ENCODE measurements at regions of chr14 and their contacts with region 1.

Region 1: GRCh38 chr14:68816262-68816942 is 23.5 kb upstream of the ZFP36L1 start:
- DNase-seq: peak; percentile 83 to 92 (median 86)
- H3K4me3 ChIP-seq: peak overlapping the region; percentile 79
- H3K4me3 Mint-ChIP-seq: peak overlapping the region; percentile 76 to 94 (median 82)
- H3K27ac ChIP-seq: peak overlapping the region; percentile 86
- H3K27ac Mint-ChIP-seq: peak overlapping the region; percentile 90 to 100 (median 96)
- H3K4me1 ChIP-seq: peaks cover 73% of the 10 kb centered on the region
- H3K4me1 Mint-ChIP-seq: peaks cover 68 to 76% (median 73%) of the 10 kb centered on the region in 3 donors
- H3K27me3 ChIP-seq: no peaks in the 10 kb centered on the region
- H3K27me3 Mint-ChIP-seq: no peaks in the 10 kb centered on the region

Region 2: DNA sequence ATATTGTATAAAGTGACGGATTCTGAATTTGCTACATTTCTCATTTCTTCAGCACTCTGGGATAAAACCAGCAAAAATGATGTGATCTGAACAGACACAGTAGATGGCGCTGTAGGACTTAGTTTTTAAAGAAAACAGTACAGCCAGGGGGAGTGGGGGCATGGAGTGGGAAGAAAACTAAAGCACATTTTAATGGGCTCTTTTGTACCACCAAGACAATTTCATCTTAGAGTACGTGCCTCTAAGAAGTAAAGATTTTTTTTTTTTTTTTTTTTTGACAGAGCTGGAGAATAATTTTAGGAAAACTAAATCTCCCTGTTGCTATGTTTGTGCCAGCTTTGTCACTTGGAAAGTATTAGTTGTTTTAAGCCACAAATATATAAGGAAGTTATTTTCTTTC is 872.5 kb before region 1 on chr14:
- CTCF ChIA-PET with region 1: interaction called, 18 read pairs
- POLR2A ChIA-PET with region 1: no interaction called
- DNase-seq: peak; percentile 19 to 52 (median 39)
- H3K4me3 ChIP-seq: no peak overlapping the region
- H3K4me3 Mint-ChIP-seq: no peak overlapping the region
- H3K27ac ChIP-seq: no peak overlapping the region
- H3K27ac Mint-ChIP-seq: no peak overlapping the region
- H3K4me1 ChIP-seq: no peaks in the 10 kb centered on the region
- H3K4me1 Mint-ChIP-seq: peaks cover 0 to 1% (median 0%) of the 10 kb centered on the region in 3 donors
- H3K27me3 ChIP-seq: no peaks in the 10 kb centered on the region
- H3K27me3 Mint-ChIP-seq: no peaks in the 10 kb centered on the region

Region 3: GRCh38 chr14:68283378-68284123 is 532.9 kb before region 1 on chr14:
- CTCF ChIA-PET with region 1: interaction called, 6 read pairs
- POLR2A ChIA-PET with region 1: interaction called, 10 read pairs
- DNase-seq: peak; percentile 42 to 77 (median 65)
- H3K4me3 ChIP-seq: peak overlapping the region; percentile 3
- H3K4me3 Mint-ChIP-seq: peak overlapping the region; percentile 21 to 83 (median 65)
- H3K27ac ChIP-seq: peak overlapping the region; percentile 52
- H3K27ac Mint-ChIP-seq: peak overlapping the region; percentile 89 to 97 (median 94)
- H3K4me1 ChIP-seq: peaks cover 68% of the 10 kb centered on the region
- H3K4me1 Mint-ChIP-seq: peaks cover 64 to 71% (median 65%) of the 10 kb centered on the region in 3 donors
- H3K27me3 ChIP-seq: no peaks in the 10 kb centered on the region
- H3K27me3 Mint-ChIP-seq: no peaks in the 10 kb centered on the region

Region 4: DNA sequence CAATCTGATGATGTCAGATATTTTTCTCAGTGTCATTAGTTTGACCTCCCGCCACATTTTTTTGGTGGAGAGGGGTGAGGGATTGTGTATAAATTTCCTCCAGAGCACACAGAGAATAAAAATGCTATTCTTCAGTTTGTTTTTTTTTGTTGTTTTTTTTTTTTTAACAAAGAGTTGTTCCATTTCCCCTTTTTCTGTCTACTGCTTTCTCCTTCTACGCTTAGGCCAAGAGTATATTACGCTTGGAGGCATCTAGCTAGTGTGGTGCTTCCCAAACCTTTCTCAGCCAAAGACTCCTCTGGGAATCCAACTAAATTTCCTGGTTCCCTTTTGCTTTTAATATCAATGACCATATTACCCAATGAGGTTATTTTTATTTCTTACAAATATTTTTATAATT is 489.2 kb before region 1 on chr14:
- CTCF ChIA-PET with region 1: no interaction called
- POLR2A ChIA-PET with region 1: no interaction called
- DNase-seq: no peak
- H3K4me3 ChIP-seq: no peak overlapping the region
- H3K4me3 Mint-ChIP-seq: no peak overlapping the region
- H3K27ac ChIP-seq: no peak overlapping the region
- H3K27ac Mint-ChIP-seq: peak overlapping the region in 1 of 8 donors; percentile 31
- H3K4me1 ChIP-seq: no peaks in the 10 kb centered on the region
- H3K4me1 Mint-ChIP-seq: no peaks in the 10 kb centered on the region
- H3K27me3 ChIP-seq: no peaks in the 10 kb centered on the region
- H3K27me3 Mint-ChIP-seq: no peaks in the 10 kb centered on the region

Region 5: GRCh38 chr14:68780358-68781160 is 35.8 kb before region 1 on chr14:
- CTCF ChIA-PET with region 1: interaction called, 282 read pairs
- POLR2A ChIA-PET with region 1: interaction called, 38 read pairs
- DNase-seq: peak in 3 of 5 donors; percentile 14 to 49 (median 21)
- H3K4me3 ChIP-seq: peak overlapping the region; percentile 57
- H3K4me3 Mint-ChIP-seq: peak overlapping the region; percentile 71 to 90 (median 85)
- H3K27ac ChIP-seq: peak overlapping the region; percentile 55
- H3K27ac Mint-ChIP-seq: peak overlapping the region; percentile 95 to 99 (median 98)
- H3K4me1 ChIP-seq: peaks cover 79% of the 10 kb centered on the region
- H3K4me1 Mint-ChIP-seq: peaks cover 78 to 95% (median 84%) of the 10 kb centered on the region in 3 donors
- H3K27me3 ChIP-seq: no peaks in the 10 kb centered on the region
- H3K27me3 Mint-ChIP-seq: no peaks in the 10 kb centered on the region

Region 6: GRCh38 chr14:68862954-68863594 is 46.7 kb after region 1 on chr14:
- CTCF ChIA-PET with region 1: no interaction called
- POLR2A ChIA-PET with region 1: no interaction called
- DNase-seq: peak; percentile 27 to 72 (median 41)
- H3K4me3 ChIP-seq: no peak overlapping the region
- H3K4me3 Mint-ChIP-seq: no peak overlapping the region
- H3K27ac ChIP-seq: no peak overlapping the region
- H3K27ac Mint-ChIP-seq: peak overlapping the region in 1 of 8 donors; percentile 47
- H3K4me1 ChIP-seq: no peaks in the 10 kb centered on the region
- H3K4me1 Mint-ChIP-seq: no peaks in the 10 kb centered on the region
- H3K27me3 ChIP-seq: no peaks in the 10 kb centered on the region
- H3K27me3 Mint-ChIP-seq: peaks cover 0 to 3% of the 10 kb centered on the region in 2 donors

Region 7: DNA sequence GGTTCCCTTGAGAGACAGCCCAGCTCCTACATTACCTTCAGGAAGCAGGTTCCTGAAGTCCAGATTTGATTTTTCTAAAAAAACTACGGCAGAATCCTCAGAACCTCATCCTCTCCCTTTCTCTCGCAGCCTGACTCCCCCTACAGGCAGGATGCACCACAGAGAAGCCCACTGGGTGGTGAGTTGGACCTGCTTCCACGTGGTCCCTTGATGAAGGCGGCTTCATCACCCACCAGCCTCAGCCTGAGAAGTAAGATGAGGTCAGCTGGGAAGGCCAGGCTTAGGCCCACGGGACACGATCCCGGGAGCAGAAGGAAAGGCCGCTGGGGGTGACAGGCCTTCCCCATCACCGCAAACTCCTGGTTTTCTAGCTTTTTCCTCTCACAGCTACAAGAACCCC is 79.7 kb after region 1 on chr14:
- CTCF ChIA-PET with region 1: no interaction called
- POLR2A ChIA-PET with region 1: no interaction called
- DNase-seq: no peak
- H3K4me3 ChIP-seq: no peak overlapping the region
- H3K4me3 Mint-ChIP-seq: no peak overlapping the region
- H3K27ac ChIP-seq: no peak overlapping the region
- H3K27ac Mint-ChIP-seq: no peak overlapping the region
- H3K4me1 ChIP-seq: no peaks in the 10 kb centered on the region
- H3K4me1 Mint-ChIP-seq: peaks cover 7 to 11% (median 11%) of the 10 kb centered on the region in 3 donors
- H3K27me3 ChIP-seq: no peaks in the 10 kb centered on the region
- H3K27me3 Mint-ChIP-seq: peaks cover 0 to 1% of the 10 kb centered on the region in 2 donors

Region 8: GRCh38 chr14:68908803-68909202 is 92.4 kb after region 1 on chr14:
- CTCF ChIA-PET with region 1: no interaction called
- POLR2A ChIA-PET with region 1: no interaction called
- DNase-seq: no peak
- H3K4me3 ChIP-seq: no peak overlapping the region
- H3K4me3 Mint-ChIP-seq: no peak overlapping the region
- H3K27ac ChIP-seq: no peak overlapping the region
- H3K27ac Mint-ChIP-seq: peak overlapping the region in 1 of 8 donors; percentile 47
- H3K4me1 ChIP-seq: peaks cover 4% of the 10 kb centered on the region
- H3K4me1 Mint-ChIP-seq: peaks cover 4 to 11% (median 7%) of the 10 kb centered on the region in 3 donors
- H3K27me3 ChIP-seq: no peaks in the 10 kb centered on the region
- H3K27me3 Mint-ChIP-seq: peaks cover 0 to 4% of the 10 kb centered on the region in 2 donors